ENCODE measurements at regions of chr11 and their contacts with region 1.

Region 1: DNA sequence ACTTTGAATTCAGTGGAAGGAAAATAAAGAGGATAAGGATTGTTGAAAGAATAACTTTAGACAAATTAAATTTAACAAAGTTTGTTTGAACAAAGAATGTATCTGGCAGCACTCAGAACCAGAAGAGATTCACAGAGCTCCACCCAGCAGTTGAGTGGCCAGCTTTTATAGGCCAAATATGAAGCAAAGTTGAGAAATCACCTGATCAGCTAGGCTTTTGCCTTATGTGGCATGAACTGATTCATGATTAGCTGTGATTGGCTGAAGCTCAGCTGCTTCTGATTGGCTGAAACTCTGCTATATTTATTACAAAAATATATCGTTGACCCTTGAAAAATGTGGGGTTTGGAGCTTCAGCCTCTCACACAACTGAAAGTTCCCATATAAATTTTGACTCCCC is 62.6 kb downstream of the PIWIL4 start:
- DNase-seq: no peak

Region 2: DNA sequence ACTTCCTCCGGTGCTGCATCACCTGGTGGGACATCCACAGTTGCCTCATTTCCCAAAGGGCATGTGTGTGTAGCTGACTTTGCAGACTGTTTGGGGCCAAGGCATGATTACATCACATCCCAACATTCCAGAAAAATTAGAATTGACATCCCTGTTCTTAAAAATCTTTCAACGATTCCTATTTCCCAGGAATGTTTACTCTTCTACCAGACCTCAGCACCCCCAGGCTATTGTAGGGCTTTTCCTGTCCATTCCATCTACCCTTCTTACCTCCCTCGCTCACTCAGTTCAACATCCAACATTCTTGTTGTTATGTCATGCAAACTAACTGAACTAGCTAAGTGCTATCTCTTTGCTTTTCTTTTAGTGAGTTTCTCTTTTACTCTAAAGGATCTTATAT is 25.2 kb before region 1 on chr11:
- intact Hi-C with region 1: no loop called
- DNase-seq: no peak

Region 3: GRCh38 chr11:94705896-94706615 is 76.3 kb after region 1 on chr11:
- intact Hi-C with region 1: no loop called
- DNase-seq: no peak

Region 4: GRCh38 chr11:94880216-94880615 is 250.5 kb after region 1 on chr11:
- intact Hi-C with region 1: loop called (anchors 5 kb)
- DNase-seq: no peak

Measured in cardiac septum (tissue), 1 donor.